ENCODE measurements at regions of chr1 and their contacts with region 1.

Region 1: GRCh38 chr1:230797942-230798418 is 50.8 kb downstream of the CAPN9 start:
- DNase-seq: peak; percentile 34
- H3K4me3 ChIP-seq: no peak overlapping the region
- CTCF ChIP-seq: peak; percentile 84

Region 2: GRCh38 chr1:230568008-230568407 is 230.0 kb before region 1 on chr1:
- CTCF ChIA-PET with region 1: no interaction called
- POLR2A ChIA-PET with region 1: no interaction called
- DNase-seq: no peak
- H3K4me3 ChIP-seq: no peak overlapping the region
- CTCF ChIP-seq: no peak

Region 3: DNA sequence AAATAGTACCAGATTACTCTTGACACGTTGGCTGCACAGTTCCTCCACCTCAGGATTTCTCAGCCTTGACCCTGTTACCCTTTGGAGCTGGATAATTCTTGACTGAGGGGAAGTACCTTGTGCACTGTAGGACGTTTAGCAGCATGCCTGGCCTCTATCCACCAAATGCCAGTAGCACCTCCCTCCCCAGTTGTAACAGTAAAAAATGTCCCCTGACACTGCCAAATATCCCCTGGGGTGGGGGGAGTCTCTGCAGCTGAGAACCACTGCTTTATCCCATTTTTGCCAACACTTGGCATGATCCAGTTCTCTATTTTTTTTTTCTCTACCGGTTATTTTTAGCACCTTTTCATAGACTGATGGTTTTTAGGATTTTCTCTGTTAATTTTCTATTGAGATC is 36.3 kb after region 1 on chr1:
- CTCF ChIA-PET with region 1: interaction called, 16 read pairs
- POLR2A ChIA-PET with region 1: no interaction called
- DNase-seq: no peak
- H3K4me3 ChIP-seq: no peak overlapping the region
- CTCF ChIP-seq: no peak

Region 4: GRCh38 chr1:230909974-230910754 is 112.2 kb after region 1 on chr1:
- CTCF ChIA-PET with region 1: interaction called, 261 read pairs
- POLR2A ChIA-PET with region 1: no interaction called
- DNase-seq: no peak
- H3K4me3 ChIP-seq: no peak overlapping the region
- CTCF ChIP-seq: no peak

Region 5: GRCh38 chr1:230978491-230979388 is 180.8 kb after region 1 on chr1 and contains the starts of genes ARV1 and TTC13:
- CTCF ChIA-PET with region 1: interaction called, 14 read pairs
- POLR2A ChIA-PET with region 1: no interaction called
- DNase-seq: peak; percentile 91
- H3K4me3 ChIP-seq: peak within 1 kb of the TSS; percentile 95
- CTCF ChIP-seq: peak; percentile 23

Region 6: GRCh38 chr1:231211005-231211857 is 413.3 kb after region 1 on chr1:
- CTCF ChIA-PET with region 1: interaction called, 86 read pairs
- POLR2A ChIA-PET with region 1: no interaction called
- DNase-seq: no peak
- H3K4me3 ChIP-seq: peak overlapping the region; percentile 56
- CTCF ChIP-seq: peak; percentile 86

Measured in AG04449 (cell line).